ENCODE measurements at regions of chr18 and their contacts with region 1.

Region 1: GRCh38 chr18:48913201-48913600 is 37.6 kb downstream of the SMAD7 start:
- DNase-seq: peak; percentile 45 to 81 (median 54)
- ATAC-seq: peak; percentile 77
- H3K4me3 ChIP-seq: no peak overlapping the region
- H3K4me3 Mint-ChIP-seq: no peak overlapping the region
- H3K27ac ChIP-seq: no peak overlapping the region
- H3K27ac Mint-ChIP-seq: no peak overlapping the region
- H3K4me1 ChIP-seq: peaks cover 27% of the 10 kb centered on the region
- H3K4me1 Mint-ChIP-seq: peaks cover 49% of the 10 kb centered on the region
- H3K27me3 ChIP-seq: no peaks in the 10 kb centered on the region
- H3K27me3 Mint-ChIP-seq: no peaks in the 10 kb centered on the region
- CTCF ChIP-seq: peak; percentile 57

Region 2: GRCh38 chr18:48834413-48835031 is 78.7 kb before region 1 on chr18:
- CTCF ChIA-PET with region 1: interaction called, 3 read pairs
- POLR2A ChIA-PET with region 1: no interaction called
- intact Hi-C with region 1: loop called in 1 of 2 experiments (anchors 5 kb)
- DNase-seq: peak; percentile 40 to 91 (median 62)
- ATAC-seq: peak; percentile 72
- H3K4me3 ChIP-seq: peak overlapping the region; percentile 54
- H3K4me3 Mint-ChIP-seq: peak overlapping the region; percentile 90
- H3K27ac ChIP-seq: peak overlapping the region; percentile 46 to 85
- H3K27ac Mint-ChIP-seq: peak overlapping the region; percentile 76
- H3K4me1 ChIP-seq: peaks cover 99% of the 10 kb centered on the region
- H3K4me1 Mint-ChIP-seq: peaks cover 84% of the 10 kb centered on the region
- H3K27me3 ChIP-seq: no peaks in the 10 kb centered on the region
- H3K27me3 Mint-ChIP-seq: no peaks in the 10 kb centered on the region
- CTCF ChIP-seq: no peak

Region 3: GRCh38 chr18:48842259-48843061 is 70.7 kb before region 1 on chr18:
- CTCF ChIA-PET with region 1: no interaction called
- POLR2A ChIA-PET with region 1: no interaction called
- intact Hi-C with region 1: loop called (anchors 5 kb)
- DNase-seq: peak in 13 of 14 experiments; percentile 27 to 94 (median 37)
- ATAC-seq: peak; percentile 87
- H3K4me3 ChIP-seq: peak overlapping the region; percentile 13
- H3K4me3 Mint-ChIP-seq: peak overlapping the region; percentile 40
- H3K27ac ChIP-seq: peak overlapping the region; percentile 58 to 81
- H3K27ac Mint-ChIP-seq: peak overlapping the region; percentile 92
- H3K4me1 ChIP-seq: peaks cover 75% of the 10 kb centered on the region
- H3K4me1 Mint-ChIP-seq: peaks cover 88% of the 10 kb centered on the region
- H3K27me3 ChIP-seq: no peaks in the 10 kb centered on the region
- H3K27me3 Mint-ChIP-seq: no peaks in the 10 kb centered on the region
- CTCF ChIP-seq: no peak

Region 4: GRCh38 chr18:48848641-48849159 is 64.5 kb before region 1 on chr18:
- CTCF ChIA-PET with region 1: no interaction called
- POLR2A ChIA-PET with region 1: no interaction called
- intact Hi-C with region 1: loop called (anchors 5 kb)
- DNase-seq: no peak
- ATAC-seq: no peak
- H3K4me3 ChIP-seq: no peak overlapping the region
- H3K4me3 Mint-ChIP-seq: no peak overlapping the region
- H3K27ac ChIP-seq: no peak overlapping the region
- H3K27ac Mint-ChIP-seq: no peak overlapping the region
- H3K4me1 ChIP-seq: peaks cover 44% of the 10 kb centered on the region
- H3K4me1 Mint-ChIP-seq: peaks cover 55% of the 10 kb centered on the region
- H3K27me3 ChIP-seq: no peaks in the 10 kb centered on the region
- H3K27me3 Mint-ChIP-seq: no peaks in the 10 kb centered on the region
- CTCF ChIP-seq: no peak

Measured in CD4-positive, alpha-beta T cell (primary cell).